ENCODE measurements at regions of chr14 and their contacts with region 1.

Region 1: GRCh38 chr14:21408147-21408546 is 24.3 kb upstream of the SUPT16H start:
- DNase-seq: peak; percentile 15
- H3K4me3 ChIP-seq: no peak overlapping the region
- CTCF ChIP-seq: no peak

Region 2: DNA sequence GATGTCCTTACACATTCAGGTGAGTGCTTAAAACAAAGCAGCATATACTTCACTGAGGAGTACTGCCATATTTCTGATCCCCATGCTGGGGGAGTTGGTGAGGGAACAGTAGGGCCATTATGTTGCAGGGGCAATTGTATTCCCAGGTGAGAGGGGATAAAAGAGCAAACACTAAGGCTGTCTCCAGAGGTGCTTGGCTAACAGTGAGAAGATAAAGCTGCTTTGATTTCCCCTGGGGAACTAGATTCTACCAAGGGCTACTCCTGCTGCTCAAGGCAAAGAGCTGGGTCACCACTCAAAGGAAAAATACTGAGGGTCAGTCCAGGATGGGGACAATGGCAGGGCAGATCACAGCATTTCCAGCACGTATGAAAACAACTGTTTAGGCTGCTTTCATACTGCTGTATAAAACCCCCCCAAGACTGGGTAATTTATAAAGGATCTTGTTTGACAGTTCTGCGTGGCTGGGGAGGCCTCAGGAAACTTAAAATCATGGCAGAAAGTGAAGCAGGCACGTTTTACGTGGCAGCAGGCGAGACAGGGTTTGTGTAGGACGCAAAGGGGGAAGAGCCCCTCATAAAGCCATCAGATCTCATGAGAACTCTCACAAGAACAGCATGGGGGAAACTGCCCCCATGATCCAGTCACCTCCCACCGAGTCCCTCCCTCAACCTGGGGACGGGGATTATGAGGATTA is 204.5 kb before region 1 on chr14:
- in situ Hi-C with region 1: loop called (anchors 10 kb)
- DNase-seq: no peak
- H3K4me3 ChIP-seq: no peak overlapping the region
- CTCF ChIP-seq: no peak

Region 3: GRCh38 chr14:21352587-21352986 is 55.6 kb before region 1 on chr14:
- in situ Hi-C with region 1: loop called (anchors 5 kb)
- DNase-seq: no peak
- H3K4me3 ChIP-seq: no peak overlapping the region
- CTCF ChIP-seq: no peak

Region 4: DNA sequence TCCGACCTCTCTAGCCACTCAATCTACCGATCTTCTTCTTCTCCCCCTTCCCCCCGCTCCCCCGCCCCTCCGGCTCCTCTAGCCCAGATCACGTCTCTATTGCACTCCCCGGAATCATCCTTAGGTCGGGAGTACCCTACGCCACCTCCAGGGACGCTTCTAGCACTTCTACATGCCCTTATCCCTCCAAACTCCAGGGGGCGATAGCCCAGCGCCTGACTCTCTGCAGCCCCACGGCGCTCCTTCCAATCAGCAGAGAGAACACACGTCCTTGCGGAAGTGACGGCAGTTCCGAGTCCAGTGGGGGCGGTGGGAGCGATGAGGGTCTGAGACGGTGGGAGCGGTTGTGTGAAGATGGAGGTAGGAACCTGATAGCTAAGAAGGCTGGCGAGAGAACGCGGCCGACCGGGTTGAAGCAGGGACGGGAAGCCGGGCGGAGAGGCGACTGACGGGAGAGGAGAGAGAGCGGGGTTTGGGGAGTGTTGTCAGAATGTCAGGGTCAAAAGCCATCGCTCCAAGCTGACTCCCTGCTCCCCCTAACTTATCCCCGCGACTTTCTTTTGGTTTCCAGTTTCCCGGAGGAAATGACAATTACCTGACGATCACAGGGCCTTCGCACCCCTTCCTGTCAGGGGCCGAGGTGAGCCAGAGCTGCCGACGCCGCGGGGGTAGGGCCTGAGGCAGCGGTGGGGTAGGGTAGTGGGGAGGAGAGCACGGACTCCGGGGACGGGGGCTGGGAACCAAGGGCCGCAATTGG is 69.0 kb after region 1 on chr14 and contains the starts of genes RAB2B and TOX4:
- in situ Hi-C with region 1: loop called (anchors 5 kb)
- DNase-seq: peak; percentile 98
- H3K4me3 ChIP-seq: peak within 1 kb of the TSS; percentile 99
- CTCF ChIP-seq: peak; percentile 99

Measured in astrocyte of the cerebellum (primary cell).